ENCODE measurements at regions of chr14 and their contacts with region 1.

Region 1: GRCh38 chr14:74618078-74618952 is 6.3 kb upstream of the LTBP2 start:
- DNase-seq: peak; percentile 93
- ATAC-seq: peak; percentile 20
- H3K4me3 ChIP-seq: no peak overlapping the region; the same call in 1 of the 2 replicates
- H3K27ac ChIP-seq: peak overlapping the region; percentile 79
- H3K4me1 ChIP-seq: peaks cover 76% of the 10 kb centered on the region
- H3K27me3 ChIP-seq: no peaks in the 10 kb centered on the region
- CTCF ChIP-seq: no peak

Region 2: GRCh38 chr14:74493343-74494261 is 124.7 kb before region 1 on chr14 and contains the start of gene ISCA2:
- CTCF ChIA-PET with region 1: no interaction called
- POLR2A ChIA-PET with region 1: interaction called, 4 read pairs
- intact Hi-C with region 1: loop called (anchors 5 kb)
- DNase-seq: peak; percentile 99
- ATAC-seq: peak; percentile 89
- H3K4me3 ChIP-seq: peak within 1 kb of the TSS; percentile 93
- H3K27ac ChIP-seq: peak within 1 kb of the TSS; percentile 19; the same call in 1 of the 2 replicates
- H3K4me1 ChIP-seq: peaks cover 46% of the 10 kb centered on the region
- H3K27me3 ChIP-seq: no peaks in the 10 kb centered on the region
- CTCF ChIP-seq: no peak
- total RNA-seq, gene ISCA2: 30.1 and 32.3 TPM in 2 replicates

Region 3: GRCh38 chr14:74658537-74659130 is 40.3 kb after region 1 on chr14:
- CTCF ChIA-PET with region 1: interaction called, 4 read pairs
- POLR2A ChIA-PET with region 1: interaction called, 12 read pairs
- intact Hi-C with region 1: no loop called
- DNase-seq: peak; percentile 58
- ATAC-seq: peak; percentile 34
- H3K4me3 ChIP-seq: no peak overlapping the region
- H3K27ac ChIP-seq: peak overlapping the region; percentile 12; the same call in 1 of the 2 replicates
- H3K4me1 ChIP-seq: peaks cover 39% of the 10 kb centered on the region
- H3K27me3 ChIP-seq: no peaks in the 10 kb centered on the region
- CTCF ChIP-seq: no peak

Region 4: DNA sequence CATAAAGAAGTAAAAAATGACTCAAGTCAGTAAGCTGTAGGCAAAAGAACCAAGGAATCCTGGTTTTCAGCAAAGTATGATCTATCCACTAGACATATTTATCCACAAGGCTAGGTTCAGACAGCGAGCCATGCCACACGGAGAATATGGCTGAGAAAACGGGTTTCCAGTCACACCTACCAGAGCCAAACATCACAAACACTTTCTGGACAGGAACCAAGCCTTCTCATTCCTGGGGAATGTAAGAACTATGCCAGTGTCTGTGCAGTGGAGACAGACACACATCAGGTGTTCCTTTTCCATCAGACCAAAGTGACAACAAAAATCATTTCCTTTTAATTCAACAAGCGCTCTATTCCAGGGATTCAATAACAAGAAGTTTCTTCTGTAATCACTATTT is 53.5 kb after region 1 on chr14:
- CTCF ChIA-PET with region 1: no interaction called
- POLR2A ChIA-PET with region 1: no interaction called
- intact Hi-C with region 1: loop called (anchors 2 kb)
- DNase-seq: peak; percentile 94
- ATAC-seq: peak; percentile 88
- H3K4me3 ChIP-seq: peak overlapping the region; percentile 21; the same call in 1 of the 2 replicates
- H3K27ac ChIP-seq: peak overlapping the region; percentile 44
- H3K4me1 ChIP-seq: peaks cover 25% of the 10 kb centered on the region
- H3K27me3 ChIP-seq: no peaks in the 10 kb centered on the region
- CTCF ChIP-seq: no peak

Region 5: GRCh38 chr14:74737753-74738325 is 119.5 kb after region 1 on chr14:
- CTCF ChIA-PET with region 1: no interaction called
- POLR2A ChIA-PET with region 1: no interaction called
- intact Hi-C with region 1: no loop called
- DNase-seq: no peak
- ATAC-seq: no peak
- H3K4me3 ChIP-seq: no peak overlapping the region
- H3K27ac ChIP-seq: no peak overlapping the region
- H3K4me1 ChIP-seq: no peaks in the 10 kb centered on the region
- H3K27me3 ChIP-seq: no peaks in the 10 kb centered on the region
- CTCF ChIP-seq: no peak

Measured in PC-3 (cell line).